Tibial artery (tissue), 4 donors: ENCODE measurements at regions of chr19 and their contacts with region 1.

Region 1: DNA sequence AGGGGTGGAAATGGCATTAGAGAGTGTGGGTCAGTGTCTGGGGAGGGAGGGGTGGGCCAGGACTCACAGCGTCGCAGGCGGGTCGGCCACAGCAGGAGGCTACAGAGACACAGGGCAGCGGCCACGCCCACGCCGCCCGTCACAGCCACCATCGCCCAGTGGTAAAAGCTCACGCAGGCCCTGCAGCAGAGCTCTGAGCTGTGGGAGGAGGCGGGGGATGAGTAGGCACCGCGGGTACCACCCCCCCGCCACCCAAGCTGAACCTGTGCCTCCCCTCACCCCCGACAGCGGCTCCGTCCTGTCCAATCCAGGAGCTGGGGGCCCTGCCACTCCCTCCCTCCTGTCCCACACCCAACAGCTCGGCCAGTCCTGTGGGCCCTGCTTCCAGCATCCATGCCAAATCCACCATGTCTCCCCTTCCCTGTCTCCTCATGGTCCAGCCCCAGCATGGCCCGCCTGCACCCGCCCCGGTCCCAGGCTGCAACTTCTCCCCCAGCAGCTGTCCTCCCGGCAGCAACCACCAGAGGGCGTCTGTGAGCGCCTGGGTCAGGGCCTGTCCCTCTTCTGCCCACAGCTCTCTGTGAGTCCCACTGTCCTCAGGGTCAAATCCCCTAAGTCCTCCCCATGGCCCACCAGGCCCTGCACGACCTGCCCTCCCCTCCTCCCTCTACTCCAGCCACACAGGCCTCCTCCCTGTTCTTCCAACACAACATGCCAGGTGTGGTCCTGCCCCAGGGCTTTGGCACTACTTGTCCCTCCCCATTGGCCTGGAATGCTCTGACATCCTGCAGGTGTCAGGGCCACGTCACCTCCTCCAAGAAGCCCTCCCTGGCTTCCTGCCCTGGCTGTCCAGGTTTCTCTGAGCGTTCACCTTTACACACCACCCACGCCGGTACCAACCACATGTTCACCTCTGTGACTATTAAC is 6.0 kb downstream of the TEKTIP1 start:
- DNase-seq: peak; percentile 37 to 85
- H3K4me3 ChIP-seq: no peak overlapping the region
- H3K27ac ChIP-seq: no peak overlapping the region
- H3K4me1 ChIP-seq: peaks cover 0 to 21% (median 10%) of the 10 kb centered on the region in 4 donors
- H3K27me3 ChIP-seq: no peaks in the 10 kb centered on the region
- CTCF ChIP-seq: peak; percentile 93 to 96

Region 2: GRCh38 chr19:3708208-3708931 is 163.4 kb after region 1 on chr19 and contains the start of gene TJP3:
- intact Hi-C with region 1: loop called (anchors 5 kb)
- DNase-seq: no peak
- H3K4me3 ChIP-seq: no peak within 1 kb of the TSS
- H3K27ac ChIP-seq: no peak within 1 kb of the TSS
- H3K4me1 ChIP-seq: no peaks in the 10 kb centered on the region
- H3K27me3 ChIP-seq: peaks cover 0 to 47% of the 10 kb centered on the region in 2 donors
- CTCF ChIP-seq: no peak